ENCODE measurements at regions of chr19 and their contacts with region 1.

Region 1: GRCh38 chr19:29665215-29665825 is at the start of gene PLEKHF1:
- DNase-seq: peak; percentile 90
- H3K4me3 Mint-ChIP-seq: peak within 1 kb of the TSS; percentile 94
- H3K27ac Mint-ChIP-seq: peak within 1 kb of the TSS; percentile 97
- H3K4me1 Mint-ChIP-seq: peaks cover 63% of the 10 kb centered on the region
- H3K27me3 Mint-ChIP-seq: peaks cover 1% of the 10 kb centered on the region
- total RNA-seq, gene PLEKHF1: 53.1 to 53.9 TPM

Region 2: DNA sequence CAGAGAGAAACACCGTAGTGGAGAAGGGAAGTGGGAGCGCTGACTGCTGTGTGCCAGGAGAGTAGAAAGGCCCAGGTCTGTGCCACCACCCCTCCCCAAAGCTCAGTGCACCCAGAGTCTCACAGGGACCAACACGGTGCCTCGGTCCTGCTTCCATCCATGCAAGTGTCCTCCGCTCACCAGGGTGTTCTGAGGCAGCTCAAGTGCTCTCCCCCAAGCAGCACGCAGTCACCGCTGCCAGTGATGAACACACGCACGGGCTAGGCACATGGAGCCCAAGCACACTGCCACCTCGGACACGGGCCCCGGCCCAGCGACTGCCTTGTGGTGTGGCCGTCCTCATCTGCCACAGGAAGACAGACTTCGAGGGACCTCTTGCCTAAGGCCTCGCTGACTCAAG is 48.8 kb before region 1 on chr19:
- CTCF ChIA-PET with region 1: interaction called, 95 read pairs
- POLR2A ChIA-PET with region 1: interaction called, 124 read pairs
- DNase-seq: no peak
- H3K4me3 Mint-ChIP-seq: no peak overlapping the region
- H3K27ac Mint-ChIP-seq: no peak overlapping the region
- H3K4me1 Mint-ChIP-seq: peaks cover 21% of the 10 kb centered on the region
- H3K27me3 Mint-ChIP-seq: no peaks in the 10 kb centered on the region

Region 3: DNA sequence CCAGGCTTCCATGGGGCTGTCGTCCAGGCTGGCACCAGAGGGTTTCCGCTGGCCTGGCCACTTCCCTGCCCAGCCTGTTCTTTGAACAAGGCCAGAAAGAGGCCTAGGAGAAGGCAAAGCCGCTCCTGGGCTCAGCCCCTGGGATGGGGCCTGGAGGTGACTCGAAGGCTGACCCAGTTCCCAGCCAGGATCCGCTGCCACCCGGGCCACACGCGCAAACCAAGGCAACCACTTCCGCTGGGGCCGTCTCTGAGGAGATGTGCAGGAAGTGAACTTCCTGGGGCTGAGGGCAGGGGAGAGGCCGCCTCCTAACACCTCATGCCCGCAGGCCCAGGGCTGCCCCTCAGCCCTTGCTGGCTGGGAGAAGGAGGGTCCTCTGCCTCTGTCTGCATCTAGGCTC is 15.1 kb after region 1 on chr19:
- CTCF ChIA-PET with region 1: interaction called, 28 read pairs
- POLR2A ChIA-PET with region 1: interaction called, 80 read pairs
- DNase-seq: peak; percentile 93
- H3K4me3 Mint-ChIP-seq: peak overlapping the region; percentile 56
- H3K27ac Mint-ChIP-seq: peak overlapping the region; percentile 88
- H3K4me1 Mint-ChIP-seq: peaks cover 63% of the 10 kb centered on the region
- H3K27me3 Mint-ChIP-seq: no peaks in the 10 kb centered on the region

Region 4: GRCh38 chr19:29694669-29695627 is 29.6 kb after region 1 on chr19:
- CTCF ChIA-PET with region 1: interaction called, 18 read pairs
- POLR2A ChIA-PET with region 1: interaction called, 6 read pairs
- DNase-seq: peak; percentile 85
- H3K4me3 Mint-ChIP-seq: no peak overlapping the region
- H3K27ac Mint-ChIP-seq: peak overlapping the region; percentile 49
- H3K4me1 Mint-ChIP-seq: peaks cover 19% of the 10 kb centered on the region
- H3K27me3 Mint-ChIP-seq: no peaks in the 10 kb centered on the region

Measured in activated CD4-positive, alpha-beta memory T cell treated with anti-CD3 and anti-CD28 coated beads, Interleukin-2, amount 10 ng/mL, durations not matched to agents 7 days and 5 days (primary cell).